ENCODE measurements at regions of chr1 and their contacts with region 1.

Region 1: DNA sequence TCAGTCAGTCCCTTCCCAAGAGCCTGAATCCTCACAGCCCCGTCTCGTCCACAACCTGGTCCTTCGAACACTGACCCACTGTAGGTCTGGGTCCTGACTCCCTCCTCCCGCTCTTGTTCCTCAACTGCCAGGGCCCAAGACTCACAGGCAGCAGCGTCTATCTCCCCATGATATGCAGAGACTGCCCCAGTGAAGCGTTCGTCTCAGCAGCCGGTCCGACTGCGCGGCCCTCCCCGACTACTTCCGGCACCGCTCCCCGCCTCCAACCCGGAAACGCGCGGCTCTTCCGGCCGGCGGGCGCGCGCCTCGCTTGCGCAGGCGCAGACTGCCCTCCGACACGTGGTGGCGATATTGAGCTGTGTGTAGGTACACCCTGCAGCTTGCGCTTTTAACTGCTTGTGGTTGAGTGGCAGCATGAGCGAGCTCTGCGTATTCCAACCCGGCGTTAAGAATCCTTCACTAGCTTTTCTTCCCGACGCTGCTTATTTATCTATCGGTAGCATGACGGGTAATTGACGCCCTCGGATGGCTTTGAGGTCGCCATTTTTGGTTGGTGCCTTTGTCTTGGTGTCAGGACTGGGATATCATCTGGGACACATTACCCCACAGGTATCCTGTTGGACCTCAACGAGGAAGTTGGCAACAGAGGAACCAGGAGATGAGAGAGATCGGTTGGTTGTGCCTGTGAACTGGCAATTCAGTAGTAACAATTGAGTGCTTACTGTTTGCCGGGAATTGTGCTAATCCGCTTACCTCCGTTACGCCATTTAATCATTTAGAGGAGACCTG is at the start of gene TAF12:
- DNase-seq: peak; percentile 90 to 98 (median 94)
- ATAC-seq: peak; percentile 89
- H3K4me3 ChIP-seq: peak within 1 kb of the TSS; percentile 79
- H3K27ac ChIP-seq: peak within 1 kb of the TSS; percentile 95
- H3K4me1 ChIP-seq: peaks cover 36 to 39% of the 10 kb centered on the region in 2 experiments; a peak in 4 of 5 replicates
- H3K27me3 ChIP-seq: no peaks in the 10 kb centered on the region
- CTCF ChIP-seq: peak; percentile 75 to 92 (median 92)
- EP300 ChIP-seq: peak; percentile 27
- POLR2A ChIP-seq: peak; percentile 99
- RAD21 ChIP-seq: peak; percentile 81 to 83
- polyA plus RNA-seq, gene TAF12: 77.8 to 89.0 TPM

Region 2: DNA sequence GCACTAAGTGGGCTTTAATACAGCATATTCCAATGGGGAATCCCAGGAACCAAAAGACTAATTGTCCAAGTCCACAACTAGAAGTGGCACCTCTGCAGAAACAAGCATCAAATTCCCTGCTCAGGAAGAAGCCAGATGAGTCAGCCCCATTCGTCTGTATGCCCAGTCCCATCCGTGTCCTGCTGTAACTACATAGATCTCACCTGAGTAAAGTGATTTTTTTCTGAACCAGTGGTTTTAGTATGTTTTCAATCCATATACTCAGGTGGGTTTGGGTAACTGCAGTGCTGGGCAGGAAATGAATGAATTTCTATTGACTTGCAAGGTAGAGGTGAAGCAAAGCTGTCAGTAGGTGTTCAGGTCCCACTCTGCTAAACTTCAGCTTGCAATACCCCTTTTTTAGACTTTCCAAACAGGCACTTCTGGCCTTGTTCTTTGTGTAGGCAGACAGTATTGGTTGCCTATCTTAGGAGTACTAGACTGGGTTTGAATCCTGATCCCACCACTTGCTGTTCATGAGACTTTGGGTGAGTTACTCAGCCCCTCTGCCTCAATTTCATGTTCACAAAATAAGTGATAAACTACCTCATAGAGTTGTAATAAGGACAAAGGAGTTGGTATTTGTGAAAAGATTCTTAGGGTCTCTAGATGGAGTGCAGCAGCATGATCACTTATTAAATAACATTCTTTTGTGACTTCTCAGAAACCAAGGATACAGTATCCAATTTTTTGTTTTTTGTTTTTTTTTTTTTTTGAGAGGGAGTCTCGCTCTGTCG is 132.2 kb before region 1 on chr1:
- CTCF ChIA-PET with region 1: no interaction called
- POLR2A ChIA-PET with region 1: interaction called, 31 read pairs
- in situ Hi-C with region 1: no loop called
- intact Hi-C with region 1: no loop called
- DNase-seq: peak in 2 of 4 experiments; percentile 17 to 75
- ATAC-seq: peak; percentile 3
- H3K4me3 ChIP-seq: peak overlapping the region; percentile 87
- H3K27ac ChIP-seq: peak overlapping the region; percentile 94
- H3K4me1 ChIP-seq: peaks cover 2 to 19% of the 10 kb centered on the region in 2 experiments; a peak in 2 of 5 replicates
- H3K27me3 ChIP-seq: no peaks in the 10 kb centered on the region
- CTCF ChIP-seq: no peak
- EP300 ChIP-seq: no peak
- POLR2A ChIP-seq: peak; percentile 94
- RAD21 ChIP-seq: no peak

Region 3: GRCh38 chr1:28631713-28632112 is 11.3 kb before region 1 on chr1:
- CTCF ChIA-PET with region 1: no interaction called
- POLR2A ChIA-PET with region 1: interaction called, 40 read pairs
- in situ Hi-C with region 1: no loop called
- intact Hi-C with region 1: no loop called
- DNase-seq: no peak
- ATAC-seq: no peak
- H3K4me3 ChIP-seq: no peak overlapping the region
- H3K27ac ChIP-seq: peak overlapping the region; percentile 4; the same call in 1 of the 3 replicates
- H3K4me1 ChIP-seq: no peaks in the 10 kb centered on the region; a peak in 2 of 5 replicates
- H3K27me3 ChIP-seq: no peaks in the 10 kb centered on the region
- CTCF ChIP-seq: no peak
- EP300 ChIP-seq: no peak
- POLR2A ChIP-seq: no peak
- RAD21 ChIP-seq: no peak

Region 4: DNA sequence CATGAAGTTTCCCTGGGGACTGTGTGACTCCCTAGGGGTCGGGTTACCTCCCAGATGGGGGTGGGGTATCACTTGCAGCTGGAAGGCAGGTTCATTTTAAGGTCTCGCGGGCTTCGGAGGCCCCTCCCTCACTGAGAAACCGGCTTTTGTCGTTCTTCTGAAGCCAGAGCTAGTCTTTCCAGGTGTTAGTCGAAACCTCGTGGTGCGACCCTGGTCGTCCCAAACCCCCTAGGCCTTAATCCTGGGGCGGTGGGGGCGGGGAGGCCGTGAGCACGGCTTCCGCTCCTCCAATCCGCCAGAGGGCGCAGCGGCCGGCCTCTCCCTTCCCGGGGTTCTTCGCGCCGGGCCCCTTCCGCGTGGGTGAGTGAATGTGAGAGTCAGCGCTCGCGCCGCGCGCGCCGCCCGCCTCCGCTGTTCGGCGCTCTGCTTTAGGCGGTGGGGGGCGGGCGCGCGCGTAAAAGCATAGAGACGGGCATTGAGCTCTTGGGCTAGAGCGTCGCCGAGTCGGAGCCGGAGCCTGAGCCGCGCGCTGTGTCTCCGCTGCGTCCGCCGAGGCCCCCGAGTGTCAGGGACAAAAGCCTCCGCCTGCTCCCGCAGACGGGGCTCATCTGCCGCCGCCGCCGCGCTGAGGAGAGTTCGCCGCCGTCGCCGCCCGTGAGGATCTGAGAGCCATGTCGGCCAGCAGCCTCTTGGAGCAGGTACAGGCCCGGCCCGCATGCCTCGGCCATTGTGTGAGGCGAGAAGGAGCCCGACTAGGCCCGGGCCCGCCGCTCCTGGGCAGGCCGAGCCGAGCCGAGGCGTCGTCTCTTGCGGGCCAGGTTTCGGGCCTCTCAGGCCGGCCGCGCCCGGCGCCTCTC is 93.6 kb after region 1 on chr1 and contains the start of gene YTHDF2:
- CTCF ChIA-PET with region 1: interaction called, 3 read pairs
- POLR2A ChIA-PET with region 1: interaction called, 52 read pairs
- in situ Hi-C with region 1: no loop called
- intact Hi-C with region 1: loop called (anchors 1 kb)
- DNase-seq: peak; percentile 92 to 100 (median 96)
- ATAC-seq: peak; percentile 94
- H3K4me3 ChIP-seq: peak within 1 kb of the TSS; percentile 96
- H3K27ac ChIP-seq: peak within 1 kb of the TSS; percentile 92
- H3K4me1 ChIP-seq: peaks cover 18 to 24% of the 10 kb centered on the region in 2 experiments; a peak in 4 of 5 replicates
- H3K27me3 ChIP-seq: no peaks in the 10 kb centered on the region
- CTCF ChIP-seq: peak; percentile 82 to 95 (median 86)
- EP300 ChIP-seq: peak; percentile 42; the same call in 1 of the 2 replicates
- POLR2A ChIP-seq: peak; percentile 86
- RAD21 ChIP-seq: peak; percentile 36 to 54
- polyA plus RNA-seq, gene YTHDF2: 41.0 to 47.2 TPM

Region 5: GRCh38 chr1:29181413-29182225 is 538.6 kb after region 1 on chr1 and contains the start of gene SRSF4:
- CTCF ChIA-PET with region 1: no interaction called
- POLR2A ChIA-PET with region 1: interaction called, 10 read pairs
- in situ Hi-C with region 1: no loop called
- intact Hi-C with region 1: loop called (anchors 10 kb)
- DNase-seq: peak; percentile 98 to 100 (median 98)
- ATAC-seq: peak; percentile 92
- H3K4me3 ChIP-seq: peak within 1 kb of the TSS; percentile 95
- H3K27ac ChIP-seq: peak within 1 kb of the TSS; percentile 100
- H3K4me1 ChIP-seq: peaks cover 20 to 32% of the 10 kb centered on the region in 2 experiments
- H3K27me3 ChIP-seq: no peaks in the 10 kb centered on the region
- CTCF ChIP-seq: peak; percentile 94 to 98 (median 95)
- EP300 ChIP-seq: peak; percentile 50; the same call in 1 of the 2 replicates
- POLR2A ChIP-seq: peak; percentile 94
- RAD21 ChIP-seq: peak; percentile 51 to 70
- polyA plus RNA-seq, gene SRSF4: 15.9 to 18.4 TPM

Measured in K562 (cell line).